Activated CD4-positive, alpha-beta memory T cell treated with anti-CD3 and anti-CD28 coated beads for 36 hours (primary cell): ENCODE measurements at regions of chr14 and their contacts with region 1.

Region 1: DNA sequence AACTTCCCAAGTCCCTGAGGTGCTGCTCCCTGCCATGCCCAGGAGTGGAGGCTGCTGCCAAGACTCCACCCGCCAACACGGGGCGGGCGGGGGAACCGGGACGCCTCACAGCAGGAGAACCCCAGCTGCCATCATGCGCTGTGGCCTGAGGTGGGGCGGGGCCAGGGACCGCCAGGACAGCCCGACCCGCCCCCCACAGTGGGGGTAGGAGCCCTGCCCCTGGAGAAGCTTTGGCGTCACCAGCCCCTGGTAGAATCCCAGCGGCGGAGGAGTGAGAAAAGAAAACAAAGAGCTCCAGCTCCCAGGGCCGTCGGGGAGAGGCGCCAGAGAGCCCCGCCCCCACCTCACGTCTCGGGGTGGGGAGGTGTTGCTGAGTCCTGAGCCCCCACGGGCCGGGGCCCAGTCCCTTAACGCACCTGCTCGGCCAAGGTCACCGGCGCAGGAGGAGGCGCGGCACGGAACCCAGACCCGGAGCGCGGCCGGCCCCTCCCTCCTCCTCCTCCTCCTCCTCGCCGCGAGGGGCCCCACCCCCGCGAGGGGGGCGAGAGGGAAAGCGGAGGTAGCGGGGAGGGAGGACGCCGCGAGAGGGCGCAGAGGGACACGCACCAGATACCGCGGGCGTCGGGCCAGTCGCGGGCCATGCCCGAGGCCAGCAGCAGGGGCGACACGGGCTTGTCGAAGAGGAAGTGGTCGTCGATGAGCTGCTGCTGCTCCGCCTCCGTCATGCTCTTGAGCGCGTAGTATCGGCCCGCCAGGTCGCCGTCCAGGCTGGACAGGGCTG is 1.8 kb downstream of the CKB start:
- DNase-seq: peak; percentile 70
- H3K4me3 Mint-ChIP-seq: peak overlapping the region; percentile 32
- H3K27ac Mint-ChIP-seq: no peak overlapping the region
- H3K4me1 Mint-ChIP-seq: peaks cover 9% of the 10 kb centered on the region
- H3K27me3 Mint-ChIP-seq: peaks cover 5% of the 10 kb centered on the region

Region 2: GRCh38 chr14:103436533-103436932 is 84.3 kb before region 1 on chr14:
- CTCF ChIA-PET with region 1: no interaction called
- POLR2A ChIA-PET with region 1: no interaction called
- intact Hi-C with region 1: no loop called
- DNase-seq: no peak
- H3K4me3 Mint-ChIP-seq: no peak overlapping the region
- H3K27ac Mint-ChIP-seq: no peak overlapping the region
- H3K4me1 Mint-ChIP-seq: peaks cover 18% of the 10 kb centered on the region
- H3K27me3 Mint-ChIP-seq: no peaks in the 10 kb centered on the region

Region 3: GRCh38 chr14:103546652-103547454 is 26.0 kb after region 1 on chr14:
- CTCF ChIA-PET with region 1: interaction called, 63 read pairs
- POLR2A ChIA-PET with region 1: no interaction called
- intact Hi-C with region 1: loop called (anchors 2 kb)
- DNase-seq: peak; percentile 76
- H3K4me3 Mint-ChIP-seq: no peak overlapping the region
- H3K27ac Mint-ChIP-seq: no peak overlapping the region
- H3K4me1 Mint-ChIP-seq: no peaks in the 10 kb centered on the region
- H3K27me3 Mint-ChIP-seq: no peaks in the 10 kb centered on the region

Region 4: DNA sequence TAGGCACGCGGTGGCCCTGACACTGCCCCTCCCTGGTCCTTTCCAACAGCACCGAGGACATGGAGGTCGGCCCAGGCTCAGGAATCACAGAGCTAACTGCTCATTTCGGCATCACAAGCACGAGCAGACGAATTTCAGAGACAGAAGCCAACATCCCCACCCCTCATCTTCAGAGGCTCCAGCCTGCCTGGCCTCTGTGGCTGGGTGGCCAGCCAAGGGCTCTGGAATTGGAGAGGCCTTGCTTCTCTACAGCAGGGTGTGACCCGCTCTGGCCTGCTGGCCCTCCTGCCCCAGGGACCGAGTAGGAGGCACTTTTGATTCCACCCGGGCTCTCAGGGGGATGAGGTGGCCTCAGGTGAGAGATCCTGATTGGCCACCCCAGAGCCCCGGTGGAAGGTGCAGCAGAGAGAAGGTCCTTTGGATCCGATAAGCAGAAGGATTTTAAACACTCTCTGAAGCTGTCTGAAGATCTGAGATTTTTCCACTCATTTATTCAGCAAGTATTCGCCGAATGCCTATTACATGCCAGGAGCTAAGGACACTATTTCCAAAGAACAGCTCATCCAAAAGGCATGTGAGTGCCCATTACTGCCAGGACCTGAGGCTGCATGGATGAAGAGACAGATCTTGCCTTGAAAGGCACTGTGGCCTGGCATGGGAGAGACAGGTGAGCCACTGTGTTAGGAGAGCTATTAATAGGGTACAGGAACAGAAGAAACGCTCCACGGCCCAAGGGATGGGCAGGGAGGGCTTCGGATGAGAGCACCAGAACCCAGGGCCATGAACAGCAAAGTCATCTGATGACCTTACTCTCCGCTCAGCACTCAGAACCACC is 31.4 kb after region 1 on chr14:
- CTCF ChIA-PET with region 1: interaction called, 63 read pairs
- POLR2A ChIA-PET with region 1: no interaction called
- intact Hi-C with region 1: loop called (anchors 2 kb)
- DNase-seq: no peak
- H3K4me3 Mint-ChIP-seq: no peak overlapping the region
- H3K27ac Mint-ChIP-seq: no peak overlapping the region
- H3K4me1 Mint-ChIP-seq: peaks cover 3% of the 10 kb centered on the region
- H3K27me3 Mint-ChIP-seq: no peaks in the 10 kb centered on the region

Region 5: DNA sequence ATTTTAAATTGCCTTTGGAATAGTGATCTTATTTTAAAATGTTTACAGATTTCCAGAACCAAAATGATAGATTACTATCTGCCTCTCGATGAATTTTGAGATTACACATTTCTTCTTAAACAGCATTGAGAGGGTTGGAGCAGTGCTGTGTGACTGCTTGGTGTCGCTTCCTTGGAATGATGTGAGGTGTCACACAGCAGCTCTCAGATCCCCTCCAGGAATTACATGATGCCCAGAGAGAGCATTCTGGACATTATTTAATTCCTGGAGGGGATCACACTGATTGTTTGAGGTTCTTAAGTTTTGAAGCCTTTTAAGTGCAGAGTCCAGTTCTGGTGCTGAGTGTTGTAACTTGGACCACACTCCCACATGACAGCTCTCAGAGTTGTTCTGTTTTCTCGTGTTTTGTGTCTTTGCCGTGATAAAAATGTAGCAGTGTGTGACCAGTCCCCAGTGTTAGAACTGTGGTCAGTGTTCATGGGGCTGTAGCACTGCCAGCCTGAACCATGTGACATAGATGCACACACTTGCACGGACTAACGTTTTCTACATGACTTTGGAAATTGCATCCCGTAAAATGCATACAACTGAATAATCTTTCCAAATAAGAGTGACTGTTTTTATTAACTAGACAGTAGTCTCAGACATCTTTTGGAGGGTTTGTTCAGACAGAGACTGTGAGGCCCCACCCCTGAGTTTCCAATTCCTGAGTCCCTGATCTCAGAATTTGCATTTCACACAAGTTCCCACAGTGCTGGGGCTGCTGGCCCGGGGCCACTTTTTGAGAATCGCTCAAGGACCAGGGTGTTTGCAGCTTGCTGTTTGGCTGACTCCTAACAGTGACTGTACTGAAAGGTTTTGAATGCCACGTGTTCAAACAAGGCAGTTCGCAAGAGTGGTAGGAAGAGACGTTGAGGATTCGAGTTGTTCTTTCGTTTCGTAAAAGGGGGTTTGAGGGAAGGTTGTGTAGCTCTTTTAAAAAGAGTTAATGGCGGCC is 168.4 kb after region 1 on chr14:
- CTCF ChIA-PET with region 1: no interaction called
- POLR2A ChIA-PET with region 1: no interaction called
- intact Hi-C with region 1: no loop called
- DNase-seq: no peak
- H3K4me3 Mint-ChIP-seq: no peak overlapping the region
- H3K27ac Mint-ChIP-seq: no peak overlapping the region
- H3K4me1 Mint-ChIP-seq: no peaks in the 10 kb centered on the region
- H3K27me3 Mint-ChIP-seq: no peaks in the 10 kb centered on the region